ENCODE measurements at regions of chr1 and their contacts with region 1.

Region 1: GRCh38 chr1:236281654-236282424 is at the start of gene ERO1B:
- DNase-seq: peak; percentile 99
- ATAC-seq: peak; percentile 100
- total RNA-seq, gene ERO1B: 7.2 TPM

Region 2: DNA sequence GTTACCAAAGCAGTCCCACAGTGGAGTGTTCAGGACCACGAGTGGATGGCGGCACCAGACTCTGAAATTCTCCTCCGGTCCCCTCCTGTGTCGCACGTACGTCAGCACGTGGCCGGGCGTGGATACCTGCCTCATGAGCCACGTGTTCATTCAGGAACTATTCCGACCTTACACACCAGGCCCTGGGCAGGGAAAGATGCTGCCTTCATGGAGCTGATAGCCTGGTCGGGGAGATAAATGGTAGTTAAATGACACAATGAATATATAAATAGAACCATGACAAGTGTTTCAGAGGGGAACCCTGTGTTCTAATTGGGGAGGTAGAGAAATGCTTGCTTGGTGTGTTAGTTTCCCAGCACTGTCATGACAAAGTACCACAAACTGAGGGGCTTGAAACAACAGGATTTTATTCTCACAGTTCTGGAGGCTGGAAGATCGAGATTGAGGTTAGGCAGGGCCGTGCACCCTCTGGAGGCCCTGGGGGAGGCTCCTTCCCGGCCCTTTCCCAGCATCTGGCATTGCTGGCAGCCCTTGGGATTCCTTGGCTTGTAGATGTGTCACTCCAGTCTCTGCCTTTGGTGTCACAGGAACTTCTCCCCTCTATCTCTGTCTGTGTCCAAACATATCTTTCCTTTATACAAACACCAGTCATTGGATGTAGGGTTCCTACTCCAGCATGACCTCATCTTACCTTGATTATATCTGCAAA is 168.4 kb before region 1 on chr1:
- intact Hi-C with region 1: loop called (anchors 10 kb)
- DNase-seq: no peak
- ATAC-seq: peak; percentile 67

Region 3: GRCh38 chr1:236142253-236143103 is 139.4 kb before region 1 on chr1 and contains the start of gene GPR137B:
- intact Hi-C with region 1: loop called (anchors 10 kb)
- DNase-seq: no peak
- ATAC-seq: peak; percentile 56
- total RNA-seq, gene GPR137B: 32.0 TPM

Region 4: GRCh38 chr1:236400061-236400603 is 118.3 kb after region 1 on chr1:
- intact Hi-C with region 1: no loop called
- DNase-seq: no peak
- ATAC-seq: no peak

Region 5: DNA sequence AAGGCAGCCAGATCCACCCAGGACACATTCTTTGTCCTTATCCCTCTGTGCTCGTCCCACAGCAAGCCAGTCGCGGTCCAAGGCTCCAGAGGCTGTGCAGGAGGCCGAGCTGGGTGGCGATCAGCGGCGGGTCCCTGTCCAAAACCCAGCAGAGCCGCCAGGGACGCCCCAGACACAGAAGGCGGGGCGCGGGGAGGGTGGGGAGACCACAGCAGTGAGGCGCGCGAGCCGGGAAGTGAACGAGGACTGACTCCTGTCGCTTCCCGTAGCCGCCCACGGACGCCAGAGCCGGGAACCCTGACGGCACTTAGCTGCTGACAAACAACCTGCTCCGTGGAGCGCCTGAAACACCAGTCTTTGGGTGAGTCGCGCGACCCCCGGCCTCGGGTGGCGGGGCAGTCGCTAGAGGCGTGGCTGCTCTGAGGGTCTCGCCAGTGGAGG is 241.9 kb after region 1 on chr1 and contains the start of gene LGALS8:
- intact Hi-C with region 1: loop called (anchors 5 kb)
- DNase-seq: peak; percentile 96
- ATAC-seq: peak; percentile 96
- total RNA-seq, gene LGALS8: 92.3 TPM

Measured in Right ventricle myocardium inferior (tissue), 1 donor.